ENCODE measurements at regions of chr16 and their contacts with region 1.

Region 1: GRCh38 chr16:68040507-68041288 is 17.6 kb downstream of the DUS2 start:
- DNase-seq: peak; percentile 97
- H3K4me3 ChIP-seq: peak overlapping the region in 1 of 8 donors; percentile 63
- H3K27ac ChIP-seq: peak overlapping the region in 7 of 8 donors; percentile 72 to 90 (median 87)
- H3K4me1 ChIP-seq: peaks cover 15 to 97% (median 63%) of the 10 kb centered on the region in 6 donors
- H3K27me3 ChIP-seq: no peaks in the 10 kb centered on the region
- CTCF ChIP-seq: peak; percentile 62 to 93 (median 89)
- POLR2A ChIP-seq: no peak

Region 2: GRCh38 chr16:67993189-67994039 is 47.3 kb before region 1 on chr16:
- intact Hi-C with region 1: loop called (anchors 5 kb)
- DNase-seq: peak; percentile 97
- H3K4me3 ChIP-seq: peak overlapping the region; percentile 9 to 64 (median 34)
- H3K27ac ChIP-seq: peak overlapping the region; percentile 82 to 93 (median 86)
- H3K4me1 ChIP-seq: peaks cover 17 to 88% (median 52%) of the 10 kb centered on the region in 6 donors
- H3K27me3 ChIP-seq: no peaks in the 10 kb centered on the region
- CTCF ChIP-seq: peak; percentile 99 to 100 (median 99)
- POLR2A ChIP-seq: no peak

Region 3: DNA sequence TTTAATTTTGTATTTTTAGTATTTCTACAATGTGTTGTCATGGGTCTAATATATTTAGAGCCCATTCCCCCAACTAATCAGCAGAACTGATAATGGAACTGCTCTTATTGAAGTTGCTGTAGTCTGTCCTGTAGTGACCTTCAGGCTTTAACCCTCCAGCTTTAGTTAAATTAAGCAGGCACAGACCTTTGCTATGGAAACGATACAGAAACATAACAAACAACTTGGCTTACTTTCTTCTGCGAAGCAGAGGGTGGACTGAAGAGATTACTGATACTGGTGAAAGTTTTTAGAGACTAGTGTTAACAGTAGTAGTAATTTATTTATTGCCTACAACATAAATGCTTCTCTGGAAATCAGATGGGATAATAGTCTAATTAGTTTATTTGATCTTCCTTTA is 105.9 kb after region 1 on chr16:
- intact Hi-C with region 1: no loop called
- DNase-seq: no peak
- H3K4me3 ChIP-seq: no peak overlapping the region
- H3K27ac ChIP-seq: no peak overlapping the region
- H3K4me1 ChIP-seq: peaks cover 0 to 64% (median 10%) of the 10 kb centered on the region in 6 donors
- H3K27me3 ChIP-seq: no peaks in the 10 kb centered on the region
- CTCF ChIP-seq: no peak
- POLR2A ChIP-seq: no peak